ENCODE measurements at regions of chr7 and their contacts with region 1.

Region 1: DNA sequence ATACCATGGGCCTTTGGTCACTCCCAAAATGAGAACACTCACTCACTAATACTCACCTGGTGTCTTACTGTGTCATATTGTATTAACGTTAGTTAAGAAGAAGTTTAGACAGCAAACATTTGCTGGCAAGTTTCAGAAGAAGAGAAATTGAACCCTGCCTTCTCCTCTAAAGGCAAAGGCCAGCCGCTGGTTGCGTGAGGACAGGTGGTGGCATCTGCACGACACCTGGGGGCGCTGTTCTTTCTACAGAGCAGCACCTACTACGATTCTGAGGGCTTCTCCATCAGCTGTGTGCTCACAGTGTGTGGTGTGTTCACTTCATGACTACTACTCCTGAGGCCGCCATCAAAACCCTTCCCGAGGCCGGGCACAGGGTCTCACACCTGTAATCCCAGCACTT is 17.9 kb upstream of the CLEC2L start:
- DNase-seq: no peak
- ATAC-seq: no peak
- H3K4me3 ChIP-seq: no peak overlapping the region
- H3K27ac ChIP-seq: no peak overlapping the region
- H3K4me1 ChIP-seq: peaks cover 0 to under 1% (median 0%) of the 10 kb centered on the region in 9 donors
- H3K27me3 ChIP-seq: peaks cover 0 to 17% (median 0%) of the 10 kb centered on the region in 7 donors
- CTCF ChIP-seq: peak in 2 of 9 donors; percentile 13 to 19

Region 2: GRCh38 chr7:139341776-139342226 is 163.8 kb before region 1 on chr7:
- intact Hi-C with region 1: no loop called
- DNase-seq: no peak
- ATAC-seq: no peak
- H3K4me3 ChIP-seq: peak overlapping the region; percentile 59 to 93 (median 82)
- H3K27ac ChIP-seq: peak overlapping the region; percentile 98 to 100 (median 99)
- H3K4me1 ChIP-seq: peaks cover 0 to 21% (median 13%) of the 10 kb centered on the region in 9 donors
- H3K27me3 ChIP-seq: no peaks in the 10 kb centered on the region
- CTCF ChIP-seq: no peak

Region 3: GRCh38 chr7:139452958-139453672 is 52.4 kb before region 1 on chr7:
- intact Hi-C with region 1: no loop called
- DNase-seq: no peak
- ATAC-seq: no peak
- H3K4me3 ChIP-seq: no peak overlapping the region
- H3K27ac ChIP-seq: no peak overlapping the region
- H3K4me1 ChIP-seq: peaks cover 0 to 3% (median 0%) of the 10 kb centered on the region in 9 donors
- H3K27me3 ChIP-seq: no peaks in the 10 kb centered on the region
- CTCF ChIP-seq: no peak

Region 4: DNA sequence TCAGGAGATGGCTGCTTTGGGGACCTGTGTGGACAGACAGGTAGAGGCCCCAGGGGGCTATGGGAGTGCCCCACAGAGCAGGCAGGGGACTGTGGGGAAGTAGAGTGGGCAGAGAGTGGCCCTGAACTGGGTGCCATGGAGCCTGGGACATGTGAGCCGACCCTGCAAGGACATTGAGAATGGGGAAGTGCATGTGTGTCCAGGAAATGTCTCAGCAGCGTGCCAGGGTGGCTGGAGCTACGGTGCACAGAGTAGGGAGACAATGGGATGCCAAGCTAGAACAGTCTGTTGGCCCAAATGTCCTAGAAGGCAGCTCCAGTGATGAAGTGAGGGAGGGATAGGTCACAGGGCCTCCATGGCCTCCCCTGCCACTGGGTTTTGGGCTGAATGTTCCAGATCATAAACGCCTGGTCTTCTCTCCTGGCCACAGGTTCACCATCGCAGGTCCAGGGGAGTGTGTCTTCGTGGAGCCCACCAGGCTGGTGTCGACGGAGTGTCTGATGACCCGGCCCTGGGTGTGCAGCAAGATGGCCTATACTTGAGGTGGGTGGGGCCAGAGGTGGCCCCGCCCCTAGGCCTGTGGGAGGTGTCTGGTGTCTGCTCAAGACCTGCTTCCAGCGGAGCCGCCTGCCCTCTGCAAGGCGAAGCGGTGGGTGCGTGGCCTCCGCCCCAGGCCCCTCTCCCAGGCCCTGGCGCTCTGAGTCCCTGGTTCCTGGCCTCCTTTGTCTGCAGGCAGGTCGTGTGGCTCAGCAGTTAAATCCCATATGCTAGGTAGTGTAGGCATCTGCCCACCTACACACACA is 38.4 kb after region 1 on chr7:
- intact Hi-C with region 1: no loop called
- DNase-seq: no peak
- ATAC-seq: peak in 1 of 8 donors; percentile 28
- H3K4me3 ChIP-seq: no peak overlapping the region
- H3K27ac ChIP-seq: no peak overlapping the region
- H3K4me1 ChIP-seq: no peaks in the 10 kb centered on the region
- H3K27me3 ChIP-seq: peaks cover 0 to 13% (median 0%) of the 10 kb centered on the region in 7 donors
- CTCF ChIP-seq: no peak

Region 5: GRCh38 chr7:139602143-139602722 is 96.7 kb after region 1 on chr7:
- intact Hi-C with region 1: loop called in 1 of 10 experiments (anchors 10 kb)
- DNase-seq: no peak
- ATAC-seq: peak in 7 of 8 donors; percentile 32 to 77 (median 47)
- H3K4me3 ChIP-seq: no peak overlapping the region
- H3K27ac ChIP-seq: no peak overlapping the region
- H3K4me1 ChIP-seq: peaks cover 0 to 16% (median 0%) of the 10 kb centered on the region in 9 donors
- H3K27me3 ChIP-seq: no peaks in the 10 kb centered on the region
- CTCF ChIP-seq: peak in 8 of 9 donors; percentile 39 to 67 (median 62)

Region 6: DNA sequence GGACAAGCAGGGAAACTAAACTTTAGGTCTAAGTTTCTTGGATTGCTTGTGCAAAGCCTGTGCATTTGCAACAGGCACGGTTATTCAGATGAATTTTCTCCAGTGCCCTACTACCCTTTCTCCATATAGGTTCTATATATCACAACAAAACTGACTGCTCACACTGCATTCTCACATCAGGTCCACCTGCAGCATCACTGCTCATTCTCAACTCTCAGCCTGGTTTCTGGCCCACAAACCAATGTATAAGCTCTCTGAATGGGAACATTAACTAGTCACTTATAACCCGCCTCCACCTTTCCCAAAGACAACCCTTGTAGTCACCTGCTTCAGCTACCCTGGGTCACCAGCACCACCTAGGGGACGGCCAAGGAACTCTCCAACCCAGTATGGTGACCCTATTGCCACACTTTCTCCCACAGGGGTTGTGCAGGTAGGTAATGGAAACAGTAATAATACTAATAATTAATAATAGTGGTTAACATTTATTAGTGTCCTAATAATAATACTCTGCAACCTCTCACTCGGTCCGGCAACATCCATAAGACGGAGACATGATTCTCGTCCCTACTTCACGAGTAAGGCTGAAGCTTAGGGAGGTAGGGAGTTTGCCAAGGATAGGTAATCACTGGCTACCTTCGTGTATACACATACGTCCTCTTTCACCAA is 115.2 kb after region 1 on chr7:
- intact Hi-C with region 1: loop called in 2 of 10 experiments (anchors 5 to 10 kb)
- DNase-seq: no peak
- ATAC-seq: peak in 2 of 8 donors; percentile 41 to 54
- H3K4me3 ChIP-seq: no peak overlapping the region
- H3K27ac ChIP-seq: no peak overlapping the region
- H3K4me1 ChIP-seq: peaks cover 0 to 10% (median 0%) of the 10 kb centered on the region in 9 donors
- H3K27me3 ChIP-seq: no peaks in the 10 kb centered on the region
- CTCF ChIP-seq: peak; percentile 27 to 67 (median 62)

Measured in heart right ventricle (tissue), 16 donors.